ENCODE measurements at regions of chr12 and their contacts with region 1.

Region 1: DNA sequence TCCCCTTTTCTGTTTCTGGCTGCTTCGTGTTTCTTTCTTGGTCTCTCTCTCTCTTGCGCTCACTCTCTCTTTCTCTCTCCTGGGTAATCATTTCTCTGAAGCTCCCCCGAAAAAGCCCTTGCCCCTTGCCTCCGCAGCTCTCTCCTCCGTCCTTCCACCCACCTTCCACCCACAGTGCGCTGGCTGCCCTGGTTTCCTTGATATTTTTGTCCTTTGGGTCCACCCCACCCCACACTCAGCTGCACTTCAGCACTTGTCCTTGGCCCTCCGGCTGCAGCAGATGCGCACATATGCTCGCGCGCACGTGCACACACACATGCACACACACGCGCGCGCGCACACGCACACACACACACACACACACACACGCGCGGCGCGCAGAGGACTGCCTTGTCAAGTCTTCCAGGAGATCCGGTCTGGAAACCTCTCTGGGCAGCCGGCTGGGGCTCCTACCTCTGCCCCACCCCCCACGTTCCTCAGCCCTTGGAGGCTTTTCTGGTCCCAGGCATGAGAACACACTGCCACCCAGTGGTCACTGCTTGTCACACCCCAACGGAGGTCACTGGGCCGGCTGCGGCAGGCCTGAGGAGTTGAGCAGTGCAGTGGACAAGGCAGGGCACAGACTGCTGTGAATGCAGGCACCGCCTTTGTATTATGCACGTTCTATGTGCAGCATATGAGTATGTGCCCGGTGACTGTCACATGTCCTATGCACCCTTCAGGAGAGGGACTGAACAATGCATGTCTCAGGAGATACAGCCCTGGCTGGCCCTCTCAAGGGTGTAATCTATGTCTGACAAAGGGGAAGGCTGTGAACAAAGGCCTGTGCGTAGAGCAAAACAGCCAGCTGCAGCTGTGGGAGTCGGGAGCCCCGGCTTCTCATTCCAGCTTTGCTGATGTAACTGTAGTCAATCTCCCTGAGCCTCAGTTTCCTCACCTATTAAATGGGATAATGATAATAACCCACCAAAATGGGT is 6.5 kb downstream of the LAG3 start:
- DNase-seq: peak; percentile 72
- ATAC-seq: peak; percentile 96
- H3K4me3 ChIP-seq: peak overlapping the region; percentile 56
- H3K27ac ChIP-seq: no peak overlapping the region
- H3K4me1 ChIP-seq: peaks cover 29% of the 10 kb centered on the region
- H3K27me3 ChIP-seq: no peaks in the 10 kb centered on the region
- CTCF ChIP-seq: peak; percentile 95 to 99 (median 96); a peak in 5 of 6 replicates
- EP300 ChIP-seq: no peak
- POLR2A ChIP-seq: 0 out of 2 replicates have a peak, but pooled peaks have one; percentile 20
- RAD21 ChIP-seq: peak; percentile 97

Region 2: GRCh38 chr12:6554168-6555017 is 224.5 kb before region 1 on chr12:
- CTCF ChIA-PET with region 1: interaction called, 4 read pairs
- POLR2A ChIA-PET with region 1: no interaction called
- RAD21 ChIA-PET with region 1: no interaction called
- SMC1A ChIA-PET with region 1: no interaction called
- in situ Hi-C with region 1: no loop called
- intact Hi-C with region 1: loop called (anchors 5 kb)
- DNase-seq: no peak
- ATAC-seq: peak; percentile 83
- H3K4me3 ChIP-seq: peak overlapping the region; percentile 89
- H3K27ac ChIP-seq: peak overlapping the region; percentile 27
- H3K4me1 ChIP-seq: peaks cover 10% of the 10 kb centered on the region
- H3K27me3 ChIP-seq: no peaks in the 10 kb centered on the region
- CTCF ChIP-seq: peak; percentile 80 to 85 (median 84)
- EP300 ChIP-seq: no peak
- POLR2A ChIP-seq: no peak
- RAD21 ChIP-seq: peak; percentile 48

Region 3: DNA sequence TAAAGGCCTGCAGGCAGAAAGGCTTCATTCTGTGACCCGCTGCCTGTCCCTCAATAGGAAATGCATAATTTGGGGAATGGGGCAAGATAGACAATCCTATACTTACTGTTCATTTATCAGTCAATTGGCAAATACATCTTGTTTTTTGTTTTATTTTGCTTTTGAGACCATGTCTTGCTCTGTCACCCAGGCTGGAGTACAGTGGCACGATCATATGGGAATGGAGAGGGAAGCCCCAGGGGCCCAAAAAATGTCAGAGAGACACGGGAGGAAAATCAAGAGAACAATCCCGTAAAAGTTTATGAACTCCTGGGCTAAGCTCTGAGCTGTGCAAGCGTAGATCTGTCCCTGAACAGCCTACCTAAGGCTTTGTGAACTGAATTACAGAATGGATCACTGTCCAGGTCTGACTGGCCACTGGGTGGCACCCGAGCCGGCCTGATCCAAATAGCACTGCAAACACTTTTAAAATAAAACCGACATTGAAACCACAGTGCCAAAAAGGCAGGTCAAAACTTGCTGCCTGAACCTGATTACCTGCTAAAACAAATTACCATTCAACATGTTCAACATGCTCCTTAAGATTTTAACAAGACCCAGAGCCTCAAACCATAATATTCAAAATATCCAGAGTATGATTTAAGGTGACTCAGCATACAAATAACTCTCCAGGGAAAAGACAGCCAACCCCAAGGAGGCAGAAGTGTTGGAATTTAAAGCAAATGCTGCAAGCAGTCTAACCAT is 43.2 kb before region 1 on chr12:
- CTCF ChIA-PET with region 1: interaction called, 5 read pairs
- POLR2A ChIA-PET with region 1: interaction called, 3 read pairs
- RAD21 ChIA-PET with region 1: interaction called, 3 read pairs
- SMC1A ChIA-PET with region 1: interaction called, 3 read pairs
- in situ Hi-C with region 1: no loop called
- intact Hi-C with region 1: loop called (anchors 5 kb)
- DNase-seq: no peak
- ATAC-seq: peak; percentile 91
- H3K4me3 ChIP-seq: no peak overlapping the region
- H3K27ac ChIP-seq: 0 out of 2 replicates have a peak overlapping the region, but pooled peaks have one; percentile 60
- H3K4me1 ChIP-seq: peaks cover 5% of the 10 kb centered on the region; the same call in 1 of the 2 replicates
- H3K27me3 ChIP-seq: no peaks in the 10 kb centered on the region
- CTCF ChIP-seq: peak; percentile 59 to 64 (median 61)
- EP300 ChIP-seq: no peak
- POLR2A ChIP-seq: no peak
- RAD21 ChIP-seq: peak; percentile 67

Region 4: GRCh38 chr12:6764011-6764828 is 14.6 kb before region 1 on chr12:
- CTCF ChIA-PET with region 1: interaction called, 221 read pairs
- POLR2A ChIA-PET with region 1: interaction called, 9 read pairs
- RAD21 ChIA-PET with region 1: interaction called, 9 read pairs
- SMC1A ChIA-PET with region 1: interaction called, 14 read pairs
- in situ Hi-C with region 1: no loop called
- intact Hi-C with region 1: no loop called
- DNase-seq: peak; percentile 98
- ATAC-seq: peak; percentile 94
- H3K4me3 ChIP-seq: peak overlapping the region; percentile 38; the same call in 1 of the 2 replicates
- H3K27ac ChIP-seq: peak overlapping the region; percentile 76
- H3K4me1 ChIP-seq: peaks cover 30% of the 10 kb centered on the region
- H3K27me3 ChIP-seq: no peaks in the 10 kb centered on the region
- CTCF ChIP-seq: no peak
- EP300 ChIP-seq: no peak
- POLR2A ChIP-seq: no peak; the same call in 1 of the 2 replicates
- RAD21 ChIP-seq: no peak

Region 5: GRCh38 chr12:6810758-6811157 is 31.9 kb after region 1 on chr12:
- CTCF ChIA-PET with region 1: interaction called, 11 read pairs
- POLR2A ChIA-PET with region 1: interaction called, 6 read pairs
- RAD21 ChIA-PET with region 1: interaction called, 4 read pairs
- SMC1A ChIA-PET with region 1: interaction called, 3 read pairs
- in situ Hi-C with region 1: no loop called
- intact Hi-C with region 1: no loop called
- DNase-seq: no peak
- ATAC-seq: no peak
- H3K4me3 ChIP-seq: no peak overlapping the region
- H3K27ac ChIP-seq: no peak overlapping the region
- H3K4me1 ChIP-seq: 0 out of 2 replicates have a peak, but pooled peaks cover 4% of the 10 kb centered on the region
- H3K27me3 ChIP-seq: peaks cover 0 to 2% of the 10 kb centered on the region in 2 experiments; a peak in 3 of 4 replicates
- CTCF ChIP-seq: no peak
- EP300 ChIP-seq: no peak
- POLR2A ChIP-seq: no peak
- RAD21 ChIP-seq: no peak

Region 6: GRCh38 chr12:6825398-6826124 is 46.7 kb after region 1 on chr12:
- CTCF ChIA-PET with region 1: interaction called, 16 read pairs
- POLR2A ChIA-PET with region 1: no interaction called
- RAD21 ChIA-PET with region 1: interaction called, 4 read pairs
- SMC1A ChIA-PET with region 1: interaction called, 9 read pairs
- in situ Hi-C with region 1: no loop called
- intact Hi-C with region 1: no loop called
- DNase-seq: no peak
- ATAC-seq: peak; percentile 88
- H3K4me3 ChIP-seq: no peak overlapping the region
- H3K27ac ChIP-seq: no peak overlapping the region
- H3K4me1 ChIP-seq: peaks cover 4% of the 10 kb centered on the region
- H3K27me3 ChIP-seq: peaks cover 27 to 35% of the 10 kb centered on the region in 2 experiments
- CTCF ChIP-seq: peak; percentile 90 to 96 (median 92)
- EP300 ChIP-seq: no peak
- POLR2A ChIP-seq: no peak
- RAD21 ChIP-seq: peak; percentile 86

Region 7: GRCh38 chr12:6896846-6897435 is 118.1 kb after region 1 on chr12:
- CTCF ChIA-PET with region 1: no interaction called
- POLR2A ChIA-PET with region 1: no interaction called
- RAD21 ChIA-PET with region 1: no interaction called
- SMC1A ChIA-PET with region 1: no interaction called
- in situ Hi-C with region 1: no loop called
- intact Hi-C with region 1: no loop called
- DNase-seq: no peak
- ATAC-seq: no peak
- H3K4me3 ChIP-seq: no peak overlapping the region
- H3K27ac ChIP-seq: no peak overlapping the region
- H3K4me1 ChIP-seq: peaks cover 7% of the 10 kb centered on the region; the same call in 1 of the 2 replicates
- H3K27me3 ChIP-seq: no peaks in the 10 kb centered on the region
- CTCF ChIP-seq: no peak
- EP300 ChIP-seq: no peak
- POLR2A ChIP-seq: no peak
- RAD21 ChIP-seq: no peak

Region 8: DNA sequence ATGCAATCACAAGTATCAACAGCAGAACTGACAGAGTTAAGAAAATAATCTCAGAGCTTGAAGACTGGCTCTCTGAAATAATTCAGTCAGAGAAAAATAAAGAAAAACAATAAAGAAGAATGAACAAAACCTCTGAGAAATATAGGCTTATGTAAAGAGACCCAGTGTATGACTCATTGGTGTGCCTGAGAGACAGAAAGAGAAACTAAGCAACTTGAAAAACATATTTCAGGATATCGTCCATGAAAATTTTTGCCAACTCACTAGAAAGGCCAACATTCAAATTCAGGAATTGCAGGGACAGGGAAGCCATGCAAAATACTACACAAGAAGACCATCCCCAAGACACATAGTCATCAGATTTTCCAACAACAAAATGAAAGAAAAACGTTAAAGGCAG is 830.6 kb after region 1 on chr12:
- CTCF ChIA-PET with region 1: no interaction called
- POLR2A ChIA-PET with region 1: no interaction called
- RAD21 ChIA-PET with region 1: no interaction called
- SMC1A ChIA-PET with region 1: no interaction called
- in situ Hi-C with region 1: no loop called
- intact Hi-C with region 1: no loop called
- DNase-seq: no peak
- ATAC-seq: no peak
- H3K4me3 ChIP-seq: no peak overlapping the region
- H3K27ac ChIP-seq: no peak overlapping the region
- H3K4me1 ChIP-seq: no peaks in the 10 kb centered on the region
- H3K27me3 ChIP-seq: no peaks in the 10 kb centered on the region
- CTCF ChIP-seq: no peak
- EP300 ChIP-seq: no peak
- POLR2A ChIP-seq: no peak
- RAD21 ChIP-seq: no peak

Measured in GM12878 (cell line).